CD4-positive, alpha-beta T cell (primary cell): ENCODE measurements at regions of chr3 and their contacts with region 1.

Region 1: DNA sequence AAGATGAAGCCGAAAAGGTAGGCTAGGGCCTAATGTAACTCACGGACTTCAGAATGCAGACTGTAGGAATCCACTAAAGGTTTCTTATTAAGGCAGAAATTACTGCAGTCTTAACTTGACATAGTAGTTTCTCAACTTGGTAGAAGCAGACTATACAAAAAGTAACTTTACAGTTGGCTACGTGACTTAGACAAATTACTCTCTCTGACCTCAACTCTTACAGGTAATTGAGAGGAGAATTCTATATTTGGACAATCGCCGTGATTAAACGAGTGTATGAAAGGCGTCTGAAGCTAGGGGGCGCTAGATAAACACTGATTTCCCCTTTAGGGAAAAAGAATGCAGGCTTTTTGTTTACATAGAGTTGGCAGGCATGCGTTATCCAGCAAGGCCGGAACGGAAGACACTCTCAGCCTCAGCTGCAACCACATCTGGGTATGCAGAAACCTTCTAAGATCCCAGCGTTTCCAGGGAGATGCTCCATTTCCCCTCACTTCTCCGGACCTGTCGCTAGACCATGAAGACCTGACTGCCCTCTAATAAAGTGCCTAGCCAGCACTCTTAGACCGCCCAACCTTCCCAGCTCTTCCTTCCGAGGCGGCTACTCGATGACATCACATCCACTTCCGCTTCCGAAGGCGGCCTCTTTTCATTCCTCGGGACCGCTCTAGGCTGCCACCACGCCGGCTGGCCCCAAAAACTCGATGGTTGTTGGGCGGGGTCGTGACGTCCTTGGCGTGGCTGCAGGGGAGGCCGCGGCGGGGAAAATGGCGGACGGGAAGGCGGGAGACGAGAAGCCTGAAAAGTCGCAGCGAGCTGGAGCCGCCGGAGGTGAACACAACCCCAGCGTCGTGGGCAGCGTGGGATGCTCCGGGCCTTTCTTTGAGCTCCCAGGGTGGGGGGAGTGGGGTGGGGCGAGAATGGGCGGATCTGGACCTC is at the start of gene PCNP:
- DNase-seq: peak; percentile 97 to 99 (median 99)
- ATAC-seq: peak; percentile 73
- H3K4me3 ChIP-seq: peak within 1 kb of the TSS; percentile 96
- H3K4me3 Mint-ChIP-seq: peak within 1 kb of the TSS; percentile 99
- H3K27ac ChIP-seq: peak within 1 kb of the TSS; percentile 97 to 99
- H3K27ac Mint-ChIP-seq: peak within 1 kb of the TSS; percentile 96
- H3K4me1 ChIP-seq: peaks cover 40% of the 10 kb centered on the region
- H3K4me1 Mint-ChIP-seq: peaks cover 80% of the 10 kb centered on the region
- H3K27me3 ChIP-seq: no peaks in the 10 kb centered on the region
- H3K27me3 Mint-ChIP-seq: no peaks in the 10 kb centered on the region
- CTCF ChIP-seq: peak; percentile 85
- total RNA-seq, gene PCNP: 177 to 181 TPM

Region 2: DNA sequence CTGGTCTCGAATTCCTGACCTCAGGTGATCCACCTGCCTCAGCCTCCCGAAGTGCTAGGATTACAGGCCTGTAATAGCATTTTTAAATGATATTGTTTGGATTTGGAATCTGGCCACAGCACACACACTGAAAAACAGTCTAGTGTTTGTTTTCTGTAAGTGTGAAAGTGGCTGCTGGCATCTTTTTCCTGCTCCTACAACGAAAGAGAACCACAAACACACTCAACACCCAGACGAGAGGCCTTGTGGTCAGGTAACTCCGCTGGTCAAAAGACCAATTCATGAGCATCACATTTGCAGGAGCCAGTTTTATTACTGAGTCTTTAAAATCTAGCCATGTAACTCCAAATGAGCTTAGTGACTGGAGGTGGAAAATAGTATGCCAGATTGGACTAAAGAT is 303.6 kb before region 1 on chr3:
- CTCF ChIA-PET with region 1: no interaction called
- POLR2A ChIA-PET with region 1: no interaction called
- intact Hi-C with region 1: no loop called
- DNase-seq: no peak
- ATAC-seq: no peak
- H3K4me3 ChIP-seq: no peak overlapping the region
- H3K4me3 Mint-ChIP-seq: no peak overlapping the region
- H3K27ac ChIP-seq: no peak overlapping the region
- H3K27ac Mint-ChIP-seq: no peak overlapping the region
- H3K4me1 ChIP-seq: no peaks in the 10 kb centered on the region
- H3K4me1 Mint-ChIP-seq: no peaks in the 10 kb centered on the region
- H3K27me3 ChIP-seq: no peaks in the 10 kb centered on the region
- H3K27me3 Mint-ChIP-seq: no peaks in the 10 kb centered on the region
- CTCF ChIP-seq: no peak

Region 3: GRCh38 chr3:101351829-101352228 is 221.9 kb before region 1 on chr3:
- CTCF ChIA-PET with region 1: no interaction called
- POLR2A ChIA-PET with region 1: no interaction called
- intact Hi-C with region 1: no loop called
- DNase-seq: peak in 2 of 14 experiments; percentile 2 to 3
- ATAC-seq: no peak
- H3K4me3 ChIP-seq: no peak overlapping the region
- H3K4me3 Mint-ChIP-seq: no peak overlapping the region
- H3K27ac ChIP-seq: no peak overlapping the region
- H3K27ac Mint-ChIP-seq: no peak overlapping the region
- H3K4me1 ChIP-seq: no peaks in the 10 kb centered on the region
- H3K4me1 Mint-ChIP-seq: no peaks in the 10 kb centered on the region
- H3K27me3 ChIP-seq: no peaks in the 10 kb centered on the region
- H3K27me3 Mint-ChIP-seq: no peaks in the 10 kb centered on the region
- CTCF ChIP-seq: no peak

Region 4: DNA sequence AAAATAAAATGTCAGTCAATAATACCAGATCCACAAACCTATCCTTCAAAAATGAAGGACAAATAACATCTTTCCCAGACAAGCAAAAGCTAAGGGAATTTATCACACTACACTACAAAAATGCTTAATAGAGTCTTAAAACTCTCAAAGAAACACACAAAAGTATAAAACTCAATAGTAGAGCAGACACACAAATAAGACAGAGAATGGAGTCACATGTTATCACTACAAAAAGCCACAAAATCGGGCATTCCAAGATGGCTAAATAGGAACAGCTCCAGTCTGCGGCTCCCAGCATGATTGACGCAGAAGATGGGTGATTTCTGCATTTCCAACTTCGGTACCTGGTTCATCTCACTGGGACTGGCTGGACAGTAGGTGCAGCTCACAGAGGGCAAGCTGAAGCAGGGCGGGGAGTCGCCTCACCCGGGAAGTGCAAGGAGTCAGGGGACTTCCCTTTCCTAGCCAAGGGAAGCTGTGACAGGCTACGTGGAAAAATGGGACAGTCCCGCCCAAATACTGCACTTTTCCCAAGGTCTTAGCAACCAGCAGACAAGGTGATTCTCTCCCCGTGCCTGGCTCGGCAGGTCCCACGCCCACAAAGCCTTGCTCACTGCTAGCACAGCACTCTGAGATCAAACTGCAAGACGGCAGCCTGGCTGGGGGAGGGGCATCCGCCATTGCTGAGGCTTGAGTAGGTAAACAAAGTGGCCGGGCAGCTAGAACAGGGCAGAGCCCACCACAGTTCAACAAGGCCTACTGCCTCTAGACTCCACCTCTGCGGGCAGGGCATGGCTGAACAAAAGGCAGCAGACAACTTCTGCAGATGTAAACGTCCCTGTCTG is 107.0 kb before region 1 on chr3:
- CTCF ChIA-PET with region 1: interaction called, 5 read pairs
- POLR2A ChIA-PET with region 1: interaction called, 4 read pairs
- intact Hi-C with region 1: loop called in 1 of 2 experiments (anchors 5 kb)
- DNase-seq: peak in 8 of 14 experiments; percentile 47 to 75 (median 68)
- ATAC-seq: peak; percentile 79
- H3K4me3 ChIP-seq: peak overlapping the region; percentile 48
- H3K4me3 Mint-ChIP-seq: peak overlapping the region; percentile 83
- H3K27ac ChIP-seq: peak overlapping the region; percentile 13 to 64
- H3K27ac Mint-ChIP-seq: peak overlapping the region; percentile 89
- H3K4me1 ChIP-seq: peaks cover 19% of the 10 kb centered on the region
- H3K4me1 Mint-ChIP-seq: peaks cover 77% of the 10 kb centered on the region
- H3K27me3 ChIP-seq: no peaks in the 10 kb centered on the region
- H3K27me3 Mint-ChIP-seq: no peaks in the 10 kb centered on the region
- CTCF ChIP-seq: no peak

Region 5: GRCh38 chr3:101531473-101532086 is 42.1 kb before region 1 on chr3:
- CTCF ChIA-PET with region 1: interaction called, 3 read pairs
- POLR2A ChIA-PET with region 1: interaction called, 11 read pairs
- intact Hi-C with region 1: no loop called
- DNase-seq: peak in 3 of 14 experiments; percentile 39 to 56 (median 49)
- ATAC-seq: peak; percentile 71
- H3K4me3 ChIP-seq: no peak overlapping the region
- H3K4me3 Mint-ChIP-seq: peak overlapping the region; percentile 4
- H3K27ac ChIP-seq: peak overlapping the region in 1 of 2 donors; percentile 61
- H3K27ac Mint-ChIP-seq: peak overlapping the region; percentile 85
- H3K4me1 ChIP-seq: peaks cover 22% of the 10 kb centered on the region
- H3K4me1 Mint-ChIP-seq: peaks cover 52% of the 10 kb centered on the region
- H3K27me3 ChIP-seq: no peaks in the 10 kb centered on the region
- H3K27me3 Mint-ChIP-seq: no peaks in the 10 kb centered on the region
- CTCF ChIP-seq: no peak

Region 6: GRCh38 chr3:101625879-101626278 is 52.2 kb after region 1 on chr3:
- CTCF ChIA-PET with region 1: no interaction called
- POLR2A ChIA-PET with region 1: no interaction called
- intact Hi-C with region 1: no loop called
- DNase-seq: no peak
- ATAC-seq: no peak
- H3K4me3 ChIP-seq: no peak overlapping the region
- H3K4me3 Mint-ChIP-seq: no peak overlapping the region
- H3K27ac ChIP-seq: no peak overlapping the region
- H3K27ac Mint-ChIP-seq: no peak overlapping the region
- H3K4me1 ChIP-seq: no peaks in the 10 kb centered on the region
- H3K4me1 Mint-ChIP-seq: no peaks in the 10 kb centered on the region
- H3K27me3 ChIP-seq: no peaks in the 10 kb centered on the region
- H3K27me3 Mint-ChIP-seq: no peaks in the 10 kb centered on the region
- CTCF ChIP-seq: no peak

Region 7: DNA sequence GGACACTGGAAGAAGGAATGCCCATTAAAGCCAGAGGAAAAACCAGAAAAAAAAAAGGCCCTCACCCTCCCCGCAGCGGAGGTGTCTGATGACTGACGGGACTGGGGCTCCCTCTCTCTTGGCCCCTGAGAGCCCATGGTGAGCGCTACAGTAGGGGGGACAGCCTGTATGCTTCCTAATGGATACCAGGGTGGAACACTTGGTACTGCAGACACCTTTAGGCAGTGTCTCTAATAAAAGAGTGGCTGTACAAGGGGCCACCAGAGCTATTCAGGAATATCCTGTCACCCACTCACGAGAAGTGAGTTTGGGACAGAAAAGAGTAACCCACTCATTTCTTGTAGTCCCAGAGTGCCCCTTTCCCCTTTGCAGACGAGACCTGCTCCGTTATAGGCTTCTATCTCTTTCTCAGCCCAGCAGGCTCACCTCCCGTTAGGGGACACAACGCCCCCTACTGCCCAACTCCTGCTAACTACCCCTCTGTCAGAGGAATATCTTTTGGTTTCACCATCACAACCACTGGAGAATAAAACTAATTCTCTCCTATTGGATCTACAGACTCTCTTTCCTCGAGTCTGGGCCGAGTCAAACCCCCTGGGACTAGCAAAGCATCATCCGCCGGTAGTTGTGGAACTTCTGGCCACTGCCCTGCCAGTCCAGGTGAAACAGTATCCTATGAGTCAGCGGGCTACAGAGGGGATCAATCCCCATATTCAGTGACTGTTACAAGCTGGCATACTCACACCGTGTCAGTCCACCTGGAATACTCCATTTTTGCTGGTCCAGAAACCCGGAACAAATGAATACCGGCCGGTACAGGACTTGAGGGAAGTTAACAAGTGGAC is 62.5 kb after region 1 on chr3:
- CTCF ChIA-PET with region 1: no interaction called
- POLR2A ChIA-PET with region 1: no interaction called
- intact Hi-C with region 1: loop called (anchors 5 kb)
- DNase-seq: peak; percentile 58 to 75 (median 66)
- ATAC-seq: peak; percentile 94
- H3K4me3 ChIP-seq: no peak overlapping the region
- H3K4me3 Mint-ChIP-seq: no peak overlapping the region
- H3K27ac ChIP-seq: no peak overlapping the region
- H3K27ac Mint-ChIP-seq: no peak overlapping the region
- H3K4me1 ChIP-seq: peaks cover 6% of the 10 kb centered on the region
- H3K4me1 Mint-ChIP-seq: peaks cover 6% of the 10 kb centered on the region
- H3K27me3 ChIP-seq: no peaks in the 10 kb centered on the region
- H3K27me3 Mint-ChIP-seq: no peaks in the 10 kb centered on the region
- CTCF ChIP-seq: peak; percentile 61

Region 8: DNA sequence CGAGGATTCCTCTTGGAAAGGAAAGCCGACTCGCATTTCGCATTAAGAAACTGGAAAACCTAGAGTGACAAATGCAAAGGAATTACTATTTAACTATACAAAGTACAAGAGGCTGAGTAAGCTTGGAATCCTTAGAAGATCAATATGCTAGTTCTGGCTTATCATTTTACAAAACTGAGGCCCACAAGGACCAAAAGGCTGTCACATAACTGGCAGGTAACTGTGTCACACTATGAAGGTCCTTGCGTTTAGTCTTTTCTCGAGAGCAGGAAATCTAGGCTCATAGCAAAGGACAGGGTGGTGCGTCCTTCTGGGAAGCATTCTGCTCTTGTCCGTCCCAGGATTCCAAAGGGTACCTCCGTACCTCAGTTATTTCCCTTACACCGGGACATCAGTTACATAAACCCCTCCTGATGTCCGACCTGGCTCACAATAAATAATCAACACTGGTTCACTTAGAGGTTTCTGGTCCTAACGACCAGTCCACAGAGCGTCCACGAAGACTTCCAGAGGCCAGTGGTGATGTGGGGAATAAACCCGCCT is 112.2 kb after region 1 on chr3:
- CTCF ChIA-PET with region 1: interaction called, 4 read pairs
- POLR2A ChIA-PET with region 1: interaction called, 46 read pairs
- intact Hi-C with region 1: no loop called
- DNase-seq: peak in 4 of 14 experiments; percentile 7 to 40 (median 26)
- ATAC-seq: peak; percentile 5
- H3K4me3 ChIP-seq: peak overlapping the region; percentile 91
- H3K4me3 Mint-ChIP-seq: peak overlapping the region; percentile 99
- H3K27ac ChIP-seq: peak overlapping the region; percentile 87 to 94
- H3K27ac Mint-ChIP-seq: peak overlapping the region; percentile 99
- H3K4me1 ChIP-seq: peaks cover 30% of the 10 kb centered on the region
- H3K4me1 Mint-ChIP-seq: peaks cover 49% of the 10 kb centered on the region
- H3K27me3 ChIP-seq: no peaks in the 10 kb centered on the region
- H3K27me3 Mint-ChIP-seq: no peaks in the 10 kb centered on the region
- CTCF ChIP-seq: no peak